ENCODE measurements at regions of chr9 and their contacts with region 1.

Region 1: DNA sequence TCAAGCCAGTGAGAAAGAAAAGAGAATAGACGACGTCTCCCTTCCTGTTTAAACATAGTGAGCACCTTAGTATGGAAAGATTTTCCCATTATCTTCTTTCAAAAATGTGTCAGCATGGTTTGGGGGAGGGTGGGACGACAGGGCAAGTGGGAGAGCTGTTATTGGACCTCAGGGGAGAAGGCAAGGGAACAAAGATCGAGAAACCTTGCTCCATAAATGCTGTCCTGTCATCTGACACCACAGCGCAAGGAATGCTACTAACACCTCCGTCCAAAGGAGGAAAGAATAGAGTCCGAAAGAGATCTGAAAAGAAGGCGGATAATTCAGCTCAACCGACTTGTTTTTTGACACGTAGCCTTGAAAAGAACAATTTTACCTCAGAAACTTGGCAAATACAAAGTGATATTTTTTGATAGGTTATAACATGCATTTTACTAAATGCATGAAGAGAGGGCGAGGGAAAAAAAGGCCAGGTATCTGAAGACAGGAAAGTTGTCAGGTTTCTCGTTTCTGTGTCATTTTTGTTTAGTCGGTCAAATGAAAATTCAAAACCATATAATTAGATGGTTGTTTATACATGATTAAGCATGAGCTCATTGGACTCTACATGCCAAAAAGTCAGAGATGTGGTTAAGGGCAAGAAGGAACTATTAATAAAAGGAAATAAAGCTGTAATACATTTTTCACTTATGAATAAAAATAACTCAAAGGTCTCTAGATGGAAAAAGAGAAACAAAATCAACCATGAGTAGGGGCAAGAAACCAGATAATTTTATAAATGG is 155.7 kb downstream of the GLIS3 start:
- DNase-seq: no peak
- ATAC-seq: no peak
- H3K4me3 Mint-ChIP-seq: no peak overlapping the region
- H3K27ac Mint-ChIP-seq: no peak overlapping the region
- H3K4me1 Mint-ChIP-seq: peaks cover 4% of the 10 kb centered on the region
- H3K27me3 Mint-ChIP-seq: peaks cover 13% of the 10 kb centered on the region
- CTCF ChIP-seq: no peak

Region 2: GRCh38 chr9:3976865-3977613 is 167.1 kb before region 1 on chr9:
- CTCF ChIA-PET with region 1: no interaction called
- POLR2A ChIA-PET with region 1: interaction called, 3 read pairs
- intact Hi-C with region 1: loop called (anchors 5 kb)
- DNase-seq: no peak
- ATAC-seq: no peak
- H3K4me3 Mint-ChIP-seq: no peak overlapping the region
- H3K27ac Mint-ChIP-seq: no peak overlapping the region
- H3K4me1 Mint-ChIP-seq: no peaks in the 10 kb centered on the region
- H3K27me3 Mint-ChIP-seq: peaks cover 7% of the 10 kb centered on the region
- CTCF ChIP-seq: no peak

Region 3: GRCh38 chr9:4353236-4353635 is 209.1 kb after region 1 on chr9:
- CTCF ChIA-PET with region 1: no interaction called
- POLR2A ChIA-PET with region 1: no interaction called
- intact Hi-C with region 1: no loop called
- DNase-seq: no peak
- ATAC-seq: no peak
- H3K4me3 Mint-ChIP-seq: no peak overlapping the region
- H3K27ac Mint-ChIP-seq: no peak overlapping the region
- H3K4me1 Mint-ChIP-seq: no peaks in the 10 kb centered on the region
- H3K27me3 Mint-ChIP-seq: no peaks in the 10 kb centered on the region
- CTCF ChIP-seq: no peak